Mammary epithelial cell (primary cell): ENCODE measurements at regions of chr2 and their contacts with region 1.

Region 1: DNA sequence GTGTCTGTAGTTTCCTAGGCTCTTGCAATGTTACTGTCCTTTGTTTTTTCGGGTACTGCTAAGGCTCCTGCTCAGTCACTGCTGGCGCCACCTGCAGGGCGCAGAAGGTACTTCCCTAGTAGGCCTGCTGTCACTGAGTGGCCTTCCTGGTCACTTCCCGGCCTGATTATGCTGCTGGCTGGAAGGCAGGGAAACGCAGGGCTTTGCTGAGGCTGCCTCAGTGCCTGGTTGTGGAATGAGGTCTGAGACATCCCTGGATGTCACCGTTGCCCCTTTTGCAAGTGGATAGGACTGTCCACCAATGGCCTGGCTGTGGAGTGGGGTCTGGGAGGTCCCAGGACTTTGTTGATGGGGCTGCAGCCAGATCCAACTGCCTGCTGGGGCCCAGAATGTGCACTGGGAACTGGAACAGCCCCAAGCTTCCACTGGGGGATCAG is 13.1 kb downstream of the DAW1 start:
- DNase-seq: peak; percentile 58
- H3K4me3 ChIP-seq: no peak overlapping the region
- H3K27ac ChIP-seq: no peak overlapping the region
- H3K4me1 ChIP-seq: peaks cover 7% of the 10 kb centered on the region
- H3K27me3 ChIP-seq: no peaks in the 10 kb centered on the region
- CTCF ChIP-seq: peak; percentile 90 to 98

Region 2: GRCh38 chr2:226813148-226813701 is 1071.3 kb before region 1 on chr2:
- CTCF ChIA-PET with region 1: no interaction called
- dilution Hi-C with region 1: no loop called
- in situ Hi-C with region 1: no loop called
- intact Hi-C with region 1: no loop called
- DNase-seq: no peak
- H3K4me3 ChIP-seq: no peak overlapping the region
- H3K27ac ChIP-seq: no peak overlapping the region
- H3K4me1 ChIP-seq: no peaks in the 10 kb centered on the region
- H3K27me3 ChIP-seq: no peaks in the 10 kb centered on the region
- CTCF ChIP-seq: peak; percentile 54 to 74

Region 3: DNA sequence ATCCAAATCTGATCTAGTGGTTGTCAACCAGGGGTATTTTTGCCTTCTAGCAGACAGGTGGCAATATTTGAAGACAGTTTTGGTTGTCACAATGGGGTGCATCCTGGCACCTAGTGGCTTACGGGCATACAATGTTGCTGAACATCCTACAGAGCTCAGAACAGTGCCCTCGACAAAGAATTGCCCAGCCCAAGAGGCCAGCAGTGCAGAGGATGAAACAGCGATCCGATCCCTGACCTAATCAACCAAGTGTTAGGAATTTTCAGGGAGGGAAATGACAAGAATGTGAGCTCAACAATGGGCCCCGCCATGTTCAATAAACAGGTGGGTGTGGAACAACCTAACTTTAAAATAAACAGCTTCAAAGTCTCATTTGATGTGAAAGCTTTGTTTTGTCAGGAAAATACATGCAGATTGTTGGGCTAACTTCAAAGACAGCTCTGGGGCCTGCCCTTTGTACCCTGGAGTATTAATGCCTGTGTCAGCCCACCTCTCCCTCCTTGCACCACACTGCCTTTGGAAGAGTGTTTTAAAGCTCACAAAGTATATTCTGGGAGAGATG is 240.5 kb before region 1 on chr2:
- CTCF ChIA-PET with region 1: no interaction called
- dilution Hi-C with region 1: no loop called
- in situ Hi-C with region 1: no loop called
- intact Hi-C with region 1: no loop called
- DNase-seq: no peak
- H3K4me3 ChIP-seq: no peak overlapping the region
- H3K27ac ChIP-seq: no peak overlapping the region
- H3K4me1 ChIP-seq: no peaks in the 10 kb centered on the region
- H3K27me3 ChIP-seq: no peaks in the 10 kb centered on the region
- CTCF ChIP-seq: no peak

Region 4: DNA sequence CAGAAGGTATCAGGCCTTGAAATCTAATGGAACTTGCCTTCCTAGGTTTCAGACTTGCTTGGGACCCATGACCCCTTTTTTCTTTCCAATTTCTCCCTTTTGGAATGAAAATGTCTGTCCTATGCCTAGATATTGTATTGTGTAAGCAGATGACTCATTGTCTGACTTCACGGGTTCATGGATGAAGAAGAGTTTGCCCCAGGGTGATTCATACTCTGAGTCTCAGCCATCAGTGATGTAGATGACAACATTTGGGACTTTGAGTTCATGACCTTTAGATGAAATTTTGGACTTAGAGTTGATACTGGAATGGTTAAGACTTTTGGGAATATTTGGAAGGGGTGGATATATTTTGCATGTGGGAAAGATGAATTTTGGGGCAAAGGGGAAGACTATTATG is 229.1 kb before region 1 on chr2:
- CTCF ChIA-PET with region 1: no interaction called
- dilution Hi-C with region 1: no loop called
- in situ Hi-C with region 1: loop called in 1 of 2 experiments (anchors 25 kb)
- intact Hi-C with region 1: loop called (anchors 1 kb)
- DNase-seq: peak; percentile 82
- H3K4me3 ChIP-seq: no peak overlapping the region
- H3K27ac ChIP-seq: no peak overlapping the region
- H3K4me1 ChIP-seq: peaks cover 13% of the 10 kb centered on the region
- H3K27me3 ChIP-seq: no peaks in the 10 kb centered on the region
- CTCF ChIP-seq: no peak

Region 5: DNA sequence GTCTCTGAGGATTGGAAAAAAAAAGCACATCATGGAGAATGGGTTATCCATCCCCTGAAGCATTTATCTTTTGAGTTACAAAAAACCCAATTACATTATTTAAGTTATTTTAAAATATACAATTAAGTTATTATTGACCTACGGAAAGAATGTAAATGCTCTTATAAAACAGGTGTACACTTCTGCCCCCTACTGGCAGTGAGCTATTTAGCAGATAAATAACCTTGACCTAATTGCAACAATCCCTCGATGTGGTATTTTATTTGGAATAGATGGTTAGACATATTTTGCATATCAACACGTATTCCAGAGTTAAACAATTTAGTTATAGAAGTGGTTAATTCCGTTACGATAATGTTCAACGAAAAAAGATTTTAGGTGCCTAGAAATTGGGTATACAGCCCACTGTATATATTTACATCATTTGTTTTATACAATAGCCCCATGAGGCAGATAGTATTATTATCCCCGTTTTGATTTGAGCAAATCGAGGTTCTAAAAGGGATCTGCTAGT is 22.2 kb before region 1 on chr2:
- CTCF ChIA-PET with region 1: no interaction called
- dilution Hi-C with region 1: no loop called
- in situ Hi-C with region 1: no loop called
- intact Hi-C with region 1: loop called (anchors 1 kb)
- DNase-seq: peak; percentile 36
- H3K4me3 ChIP-seq: no peak overlapping the region
- H3K27ac ChIP-seq: peak overlapping the region; percentile 69
- H3K4me1 ChIP-seq: peaks cover 33% of the 10 kb centered on the region
- H3K27me3 ChIP-seq: no peaks in the 10 kb centered on the region
- CTCF ChIP-seq: peak; percentile 68 to 71